CD4-positive, alpha-beta T cell (primary cell): ENCODE measurements at regions of chr21 and their contacts with region 1.

Region 1: DNA sequence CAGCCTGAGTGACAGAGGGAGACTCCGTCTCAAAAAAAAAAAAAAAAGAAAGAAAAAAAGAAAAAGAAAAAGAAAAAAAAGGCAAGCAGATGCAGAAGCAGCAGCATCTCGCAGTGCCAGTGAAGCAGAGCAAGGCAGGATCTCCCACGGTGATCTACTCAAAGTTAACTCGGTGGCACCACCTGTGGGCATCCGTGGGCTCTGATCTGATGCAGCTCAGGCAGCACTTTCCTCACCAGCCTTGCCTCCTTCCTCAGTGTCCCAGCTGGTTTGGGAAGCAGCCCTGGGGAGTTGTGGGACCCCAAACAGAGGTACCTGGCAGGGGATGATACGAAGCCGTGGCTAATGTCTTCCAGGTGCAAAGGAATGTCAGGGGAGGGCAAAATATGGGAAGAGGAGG is 104.3 kb upstream of the KRTAP19-8 start:
- DNase-seq: peak in 13 of 14 experiments; percentile 23 to 71 (median 48)
- ATAC-seq: peak; percentile 97
- H3K4me3 ChIP-seq: no peak overlapping the region
- H3K4me3 Mint-ChIP-seq: no peak overlapping the region
- H3K27ac ChIP-seq: no peak overlapping the region
- H3K27ac Mint-ChIP-seq: no peak overlapping the region
- H3K4me1 ChIP-seq: peaks cover 18% of the 10 kb centered on the region
- H3K4me1 Mint-ChIP-seq: peaks cover 50% of the 10 kb centered on the region
- H3K27me3 ChIP-seq: no peaks in the 10 kb centered on the region
- H3K27me3 Mint-ChIP-seq: no peaks in the 10 kb centered on the region
- CTCF ChIP-seq: peak; percentile 52

Region 2: DNA sequence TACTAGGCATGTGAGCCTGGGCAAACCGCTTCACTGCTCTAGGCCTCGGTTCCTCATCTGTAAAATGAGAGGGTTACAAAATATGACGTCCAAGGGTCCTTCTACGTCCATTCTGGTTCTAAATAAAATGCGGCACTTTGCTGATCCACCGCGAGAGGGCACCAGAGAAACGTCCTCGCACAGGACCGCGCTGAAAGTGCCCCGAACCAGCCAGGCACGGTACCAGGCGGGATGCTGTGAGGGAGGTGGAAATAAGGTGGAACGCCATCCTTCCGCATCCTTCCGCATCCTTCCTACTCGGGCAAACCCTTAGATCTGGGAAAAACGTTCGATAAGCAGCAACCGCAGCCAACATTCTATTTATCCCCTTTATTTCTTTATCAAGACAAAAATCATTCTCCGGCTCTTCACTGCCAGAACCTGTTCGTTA is 44.0 kb before region 1 on chr21:
- CTCF ChIA-PET with region 1: interaction called, 6 read pairs
- POLR2A ChIA-PET with region 1: interaction called, 4 read pairs
- intact Hi-C with region 1: loop called (anchors 1 to 2 kb)
- DNase-seq: peak; percentile 53 to 86 (median 68)
- ATAC-seq: peak; percentile 89
- H3K4me3 ChIP-seq: no peak overlapping the region
- H3K4me3 Mint-ChIP-seq: no peak overlapping the region
- H3K27ac ChIP-seq: no peak overlapping the region
- H3K27ac Mint-ChIP-seq: no peak overlapping the region
- H3K4me1 ChIP-seq: peaks cover 26% of the 10 kb centered on the region
- H3K4me1 Mint-ChIP-seq: peaks cover 30% of the 10 kb centered on the region
- H3K27me3 ChIP-seq: no peaks in the 10 kb centered on the region
- H3K27me3 Mint-ChIP-seq: no peaks in the 10 kb centered on the region
- CTCF ChIP-seq: peak; percentile 93

Region 3: GRCh38 chr21:31195334-31196015 is 52.9 kb after region 1 on chr21:
- CTCF ChIA-PET with region 1: no interaction called
- POLR2A ChIA-PET with region 1: no interaction called
- intact Hi-C with region 1: no loop called
- DNase-seq: no peak
- ATAC-seq: peak; percentile 25
- H3K4me3 ChIP-seq: peak overlapping the region; percentile 31
- H3K4me3 Mint-ChIP-seq: peak overlapping the region; percentile 56
- H3K27ac ChIP-seq: no peak overlapping the region
- H3K27ac Mint-ChIP-seq: peak overlapping the region; percentile 73
- H3K4me1 ChIP-seq: peaks cover 27% of the 10 kb centered on the region
- H3K4me1 Mint-ChIP-seq: peaks cover 66% of the 10 kb centered on the region
- H3K27me3 ChIP-seq: no peaks in the 10 kb centered on the region
- H3K27me3 Mint-ChIP-seq: no peaks in the 10 kb centered on the region
- CTCF ChIP-seq: no peak